MCF 10A (cell line): ENCODE measurements at regions of chr1 and their contacts with region 1.

Region 1: DNA sequence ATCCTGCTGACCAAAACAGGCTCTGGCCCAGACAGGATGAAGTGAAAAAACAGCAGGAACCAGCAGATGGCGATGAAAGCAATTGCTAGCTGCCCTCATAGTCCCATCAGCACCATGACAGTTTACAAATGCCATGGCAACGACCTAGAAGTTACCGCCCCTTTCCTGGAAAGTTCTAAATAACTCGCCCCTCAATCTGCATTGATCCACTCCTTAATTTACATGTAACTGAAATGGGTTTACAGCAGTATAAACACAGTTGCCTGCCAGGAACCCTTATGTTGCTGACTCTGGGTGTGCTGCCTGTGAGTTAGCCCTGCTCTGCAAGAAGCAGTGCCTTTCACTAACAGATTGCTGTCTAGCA is 65.5 kb upstream of the CR1L start:
- DNase-seq: peak; percentile 83
- H3K4me3 Mint-ChIP-seq: no peak overlapping the region
- H3K27ac Mint-ChIP-seq: no peak overlapping the region
- H3K4me1 Mint-ChIP-seq: no peaks in the 10 kb centered on the region
- H3K27me3 Mint-ChIP-seq: peaks cover 25% of the 10 kb centered on the region
- CTCF ChIP-seq: peak; percentile 74

Region 2: GRCh38 chr1:207565546-207566358 is 13.7 kb before region 1 on chr1:
- CTCF ChIA-PET with region 1: interaction called, 16 read pairs
- POLR2A ChIA-PET with region 1: no interaction called
- intact Hi-C with region 1: no loop called
- DNase-seq: peak; percentile 65
- H3K4me3 Mint-ChIP-seq: no peak overlapping the region
- H3K27ac Mint-ChIP-seq: no peak overlapping the region
- H3K4me1 Mint-ChIP-seq: no peaks in the 10 kb centered on the region
- H3K27me3 Mint-ChIP-seq: peaks cover 32% of the 10 kb centered on the region
- CTCF ChIP-seq: peak; percentile 59

Region 3: DNA sequence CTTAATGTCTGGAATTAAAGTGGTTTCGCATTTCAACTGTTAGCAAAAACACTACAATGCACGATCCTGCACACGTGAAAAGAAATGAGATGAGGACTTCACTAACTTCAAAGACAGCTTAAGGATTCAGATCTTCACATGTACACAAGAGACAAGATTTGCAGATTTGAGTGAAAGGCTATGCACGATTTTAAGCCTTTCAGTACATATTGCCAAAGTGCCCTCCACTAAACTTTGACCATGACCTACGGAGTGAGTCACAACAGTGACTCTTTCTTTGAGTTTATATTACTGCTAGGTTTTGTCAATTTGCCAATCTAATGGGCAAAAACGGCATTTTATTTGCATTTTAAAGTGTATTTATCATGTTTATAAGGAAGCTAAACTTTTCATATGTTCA is 24.4 kb after region 1 on chr1:
- CTCF ChIA-PET with region 1: interaction called, 19 read pairs
- POLR2A ChIA-PET with region 1: interaction called, 3 read pairs
- intact Hi-C with region 1: no loop called
- DNase-seq: peak; percentile 82
- H3K4me3 Mint-ChIP-seq: no peak overlapping the region
- H3K27ac Mint-ChIP-seq: no peak overlapping the region
- H3K4me1 Mint-ChIP-seq: peaks cover 5% of the 10 kb centered on the region
- H3K27me3 Mint-ChIP-seq: peaks cover 63% of the 10 kb centered on the region
- CTCF ChIP-seq: no peak

Region 4: DNA sequence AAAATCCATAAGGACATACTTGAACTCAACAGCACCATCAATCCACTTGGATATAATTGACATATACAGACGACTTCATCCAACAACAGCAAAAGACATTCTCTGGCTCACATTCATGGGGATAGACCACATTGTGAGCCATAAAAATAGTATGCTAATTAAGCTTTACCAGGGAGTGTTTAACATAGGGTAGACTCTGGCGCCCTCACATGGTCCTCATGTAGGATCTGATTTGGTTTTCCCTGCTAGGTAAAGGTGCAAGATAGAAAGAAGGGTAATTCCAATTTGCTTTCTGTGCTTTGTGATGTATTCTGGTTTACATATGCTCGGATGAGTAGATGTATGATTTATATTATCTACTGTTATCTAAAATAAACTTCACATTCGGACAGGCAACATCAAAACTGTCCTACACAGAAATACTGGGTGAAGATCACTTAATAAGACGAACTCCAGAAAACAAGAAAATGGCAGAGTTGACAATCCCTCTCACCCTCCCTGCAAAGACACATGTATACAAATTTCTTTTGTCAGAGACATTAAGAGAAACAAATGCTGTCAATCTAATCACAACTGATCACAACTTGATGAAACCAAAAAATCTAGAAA is 93.2 kb after region 1 on chr1:
- CTCF ChIA-PET with region 1: interaction called, 65 read pairs
- POLR2A ChIA-PET with region 1: interaction called, 7 read pairs
- intact Hi-C with region 1: loop called (anchors 1 kb)
- DNase-seq: peak; percentile 86
- H3K4me3 Mint-ChIP-seq: no peak overlapping the region
- H3K27ac Mint-ChIP-seq: no peak overlapping the region
- H3K4me1 Mint-ChIP-seq: peaks cover 12% of the 10 kb centered on the region
- H3K27me3 Mint-ChIP-seq: peaks cover 75% of the 10 kb centered on the region
- CTCF ChIP-seq: peak; percentile 90